B cell (primary cell): ENCODE measurements at regions of chr1 and their contacts with region 1.

Region 1: GRCh38 chr1:225428068-225428880 is 436 bp upstream of the LBR start:
- DNase-seq: peak; percentile 92
- ATAC-seq: peak; percentile 90
- H3K4me3 ChIP-seq: peak overlapping the region; percentile 74 to 93 (median 91)
- H3K4me3 Mint-ChIP-seq: peak overlapping the region; percentile 85
- H3K27ac ChIP-seq: peak overlapping the region; percentile 78 to 83
- H3K27ac Mint-ChIP-seq: peak overlapping the region; percentile 80
- H3K4me1 ChIP-seq: peaks cover 36 to 41% of the 10 kb centered on the region in 2 donors
- H3K4me1 Mint-ChIP-seq: peaks cover 45% of the 10 kb centered on the region
- H3K27me3 ChIP-seq: no peaks in the 10 kb centered on the region
- H3K27me3 Mint-ChIP-seq: no peaks in the 10 kb centered on the region
- CTCF ChIP-seq: no peak

Region 2: GRCh38 chr1:225441314-225442122 is 13.2 kb after region 1 on chr1:
- CTCF ChIA-PET with region 1: interaction called, 104 read pairs
- POLR2A ChIA-PET with region 1: interaction called, 85 read pairs
- intact Hi-C with region 1: loop called (anchors 1 kb)
- DNase-seq: no peak
- ATAC-seq: no peak
- H3K4me3 ChIP-seq: peak overlapping the region in 1 of 5 experiments; percentile 6
- H3K4me3 Mint-ChIP-seq: peak overlapping the region; percentile 5
- H3K27ac ChIP-seq: peak overlapping the region in 1 of 2 donors; percentile 48
- H3K27ac Mint-ChIP-seq: peak overlapping the region; percentile 38
- H3K4me1 ChIP-seq: peaks cover 42 to 59% of the 10 kb centered on the region in 2 donors
- H3K4me1 Mint-ChIP-seq: peaks cover 56% of the 10 kb centered on the region
- H3K27me3 ChIP-seq: no peaks in the 10 kb centered on the region
- H3K27me3 Mint-ChIP-seq: no peaks in the 10 kb centered on the region
- CTCF ChIP-seq: peak; percentile 22

Region 3: DNA sequence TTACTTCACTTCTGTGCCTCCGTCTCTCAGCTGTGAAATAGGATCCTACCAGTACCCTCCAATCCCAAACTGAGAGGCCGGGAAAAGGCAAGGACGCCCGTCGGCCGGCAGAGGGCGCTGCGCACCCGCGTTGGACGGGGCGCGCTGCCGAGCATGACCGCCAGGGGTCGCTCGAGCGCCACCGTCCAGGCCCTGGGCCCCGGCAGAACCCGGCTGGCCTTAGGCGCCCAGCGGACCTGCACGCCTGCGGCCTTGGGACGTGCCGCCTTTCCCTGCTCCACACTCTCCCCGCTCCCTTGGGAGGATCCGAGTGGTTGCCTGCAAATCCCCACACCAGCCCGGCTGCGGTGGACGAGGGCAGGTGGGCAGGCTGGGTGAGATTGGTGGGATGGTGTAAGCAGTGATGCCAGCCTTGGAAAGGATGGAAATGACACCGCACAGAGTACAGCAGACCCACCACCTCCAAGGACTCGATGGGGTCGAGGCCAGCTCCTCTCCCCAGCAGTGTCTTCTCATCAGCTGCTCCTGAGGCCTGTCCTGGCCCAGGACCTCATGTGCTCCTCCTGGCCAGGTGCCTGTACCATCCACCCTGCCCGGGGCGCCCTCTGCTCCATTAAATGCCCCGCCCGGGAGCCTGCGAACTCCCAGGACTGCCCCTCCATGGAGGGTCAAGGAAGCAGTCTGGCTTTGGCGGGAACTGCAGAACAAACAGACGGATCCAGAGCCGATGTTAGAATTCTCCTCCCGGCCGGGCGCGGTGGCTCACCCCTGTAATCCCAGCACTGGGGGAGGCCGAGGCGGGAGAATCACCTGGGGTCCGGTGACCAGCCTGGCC is 46.9 kb after region 1 on chr1:
- CTCF ChIA-PET with region 1: interaction called, 15 read pairs
- POLR2A ChIA-PET with region 1: interaction called, 4 read pairs
- intact Hi-C with region 1: loop called (anchors 2 kb)
- DNase-seq: peak; percentile 84
- ATAC-seq: peak; percentile 92
- H3K4me3 ChIP-seq: no peak overlapping the region
- H3K4me3 Mint-ChIP-seq: no peak overlapping the region
- H3K27ac ChIP-seq: no peak overlapping the region
- H3K27ac Mint-ChIP-seq: peak overlapping the region; percentile 32
- H3K4me1 ChIP-seq: peaks cover 32 to 44% of the 10 kb centered on the region in 2 donors
- H3K4me1 Mint-ChIP-seq: peaks cover 38% of the 10 kb centered on the region
- H3K27me3 ChIP-seq: no peaks in the 10 kb centered on the region
- H3K27me3 Mint-ChIP-seq: no peaks in the 10 kb centered on the region
- CTCF ChIP-seq: peak; percentile 100

Region 4: DNA sequence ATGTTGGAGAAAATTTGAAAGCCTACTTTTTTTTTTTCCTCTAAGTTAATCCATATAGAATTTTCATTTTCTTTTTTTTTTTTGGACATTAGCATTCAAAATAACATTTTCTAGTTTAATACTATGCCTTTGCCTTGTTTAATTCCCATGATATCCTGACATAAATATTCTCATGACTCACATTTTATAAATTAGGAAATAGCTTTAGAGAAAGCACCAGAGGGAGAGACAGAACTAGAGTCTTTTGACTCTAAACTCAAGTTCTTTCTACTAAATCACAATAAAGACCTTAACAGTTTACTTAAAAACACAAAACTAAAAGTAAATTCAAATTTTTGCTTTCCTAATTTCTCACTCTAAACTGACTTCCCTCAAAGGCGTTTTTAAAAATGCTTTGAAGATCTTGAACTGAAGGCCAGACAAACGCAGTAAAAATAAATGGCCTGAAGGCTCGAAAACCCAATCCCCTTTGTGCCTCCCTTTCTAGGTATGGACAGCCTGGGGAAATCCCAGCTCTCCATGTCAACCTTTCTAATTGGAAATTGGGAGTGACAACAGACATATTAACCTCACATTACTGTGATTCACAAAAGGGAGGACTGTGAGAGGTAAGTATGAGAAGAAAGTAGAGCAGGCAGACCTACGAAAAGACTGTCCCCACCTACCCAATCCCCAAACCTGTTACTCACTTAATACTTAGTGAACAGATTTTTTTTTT is 120.0 kb after region 1 on chr1:
- CTCF ChIA-PET with region 1: no interaction called
- POLR2A ChIA-PET with region 1: no interaction called
- intact Hi-C with region 1: no loop called
- DNase-seq: no peak
- ATAC-seq: no peak
- H3K4me3 ChIP-seq: no peak overlapping the region
- H3K4me3 Mint-ChIP-seq: no peak overlapping the region
- H3K27ac ChIP-seq: no peak overlapping the region
- H3K27ac Mint-ChIP-seq: no peak overlapping the region
- H3K4me1 ChIP-seq: no peaks in the 10 kb centered on the region
- H3K4me1 Mint-ChIP-seq: no peaks in the 10 kb centered on the region
- H3K27me3 ChIP-seq: no peaks in the 10 kb centered on the region
- H3K27me3 Mint-ChIP-seq: peaks cover 3% of the 10 kb centered on the region
- CTCF ChIP-seq: no peak

Region 5: DNA sequence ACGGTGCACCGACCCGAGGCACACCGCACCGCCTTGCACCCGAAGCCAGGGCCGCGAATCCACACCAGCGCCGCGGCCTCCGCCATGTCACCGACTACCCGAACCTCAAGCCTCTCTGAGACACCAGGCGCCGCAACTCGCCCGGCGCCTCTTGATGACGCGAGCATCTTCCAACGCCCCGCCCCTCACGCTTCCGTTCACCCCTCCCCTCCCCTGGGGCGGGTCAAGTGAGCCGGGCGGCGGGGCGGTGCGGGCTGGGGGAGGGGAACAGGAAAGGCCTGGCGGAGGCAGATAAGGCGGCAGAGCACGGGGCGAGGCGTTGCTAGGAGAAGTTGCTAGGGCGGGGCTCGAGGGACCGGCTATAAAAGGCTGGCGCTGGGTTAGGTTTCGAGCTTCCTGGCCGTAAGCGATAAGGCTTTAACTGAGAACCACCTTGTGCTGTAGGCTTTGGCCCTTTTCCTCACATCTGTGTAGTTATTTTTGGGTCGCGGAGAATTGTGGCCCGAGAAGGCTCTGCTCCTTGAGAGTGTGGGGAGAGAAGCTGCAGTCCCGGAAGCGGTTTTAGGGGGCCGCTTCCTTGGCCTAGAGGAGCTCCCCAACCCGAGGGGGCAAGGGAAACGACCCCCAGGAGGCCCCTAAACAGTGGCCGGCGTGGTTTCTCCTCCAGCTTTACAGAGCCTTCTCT is 571.1 kb after region 1 on chr1 and contains the start of gene SDE2:
- CTCF ChIA-PET with region 1: no interaction called
- POLR2A ChIA-PET with region 1: no interaction called
- intact Hi-C with region 1: loop called (anchors 2 kb)
- DNase-seq: peak; percentile 100
- ATAC-seq: peak; percentile 81
- H3K4me3 ChIP-seq: peak within 1 kb of the TSS; percentile 75 to 93 (median 88)
- H3K4me3 Mint-ChIP-seq: peak within 1 kb of the TSS; percentile 100
- H3K27ac ChIP-seq: peak within 1 kb of the TSS; percentile 100
- H3K27ac Mint-ChIP-seq: peak within 1 kb of the TSS; percentile 97
- H3K4me1 ChIP-seq: peaks cover 65 to 72% of the 10 kb centered on the region in 2 donors
- H3K4me1 Mint-ChIP-seq: peaks cover 74% of the 10 kb centered on the region
- H3K27me3 ChIP-seq: no peaks in the 10 kb centered on the region
- H3K27me3 Mint-ChIP-seq: no peaks in the 10 kb centered on the region
- CTCF ChIP-seq: no peak
- total RNA-seq, gene SDE2: 26.0 and 26.3 TPM in 2 replicates